ENCODE measurements at regions of chr19 and their contacts with region 1.

Region 1: DNA sequence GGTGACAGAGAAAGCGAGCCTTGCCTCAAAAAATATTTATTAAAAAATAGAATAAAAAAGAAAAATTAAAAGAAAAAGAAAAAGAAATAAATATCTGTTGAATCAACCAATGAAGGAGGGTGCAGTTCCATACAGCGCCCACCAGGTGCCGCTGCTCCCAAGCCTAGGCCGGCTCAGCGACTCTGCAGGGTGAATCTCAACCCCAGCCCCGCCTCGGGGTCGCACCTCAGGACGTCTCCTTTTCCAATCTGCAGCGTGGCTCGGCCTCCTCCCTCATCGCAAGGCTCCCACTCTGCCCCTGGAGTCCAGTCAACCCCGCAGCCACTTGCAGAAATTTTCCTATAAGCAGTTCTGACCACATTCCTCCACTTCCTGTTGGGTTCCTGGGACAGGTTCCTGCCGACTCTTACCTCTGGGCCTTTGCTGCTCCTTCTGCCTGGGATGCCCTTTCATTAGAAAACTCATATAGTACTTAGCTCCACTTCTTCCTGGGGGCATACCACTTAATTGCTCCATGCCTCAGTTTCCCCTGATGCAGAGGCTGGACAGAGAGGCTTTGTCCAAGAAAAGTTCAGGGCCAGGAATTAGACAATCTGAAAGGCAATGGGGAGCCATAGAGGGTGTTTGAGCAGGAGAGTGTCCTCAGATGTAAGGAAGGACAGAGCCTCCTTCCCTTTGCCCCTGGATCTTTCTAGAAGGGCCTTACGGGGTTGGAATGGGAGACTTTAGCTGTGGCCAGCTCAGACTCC is 24.3 kb downstream of the NFILZ start:
- DNase-seq: peak; percentile 49 to 80
- H3K4me3 ChIP-seq: no peak overlapping the region
- H3K4me1 ChIP-seq: no peaks in the 10 kb centered on the region
- H3K27me3 ChIP-seq: peaks cover 10% of the 10 kb centered on the region; the same call in 1 of the 2 replicates

Region 2: GRCh38 chr19:9086761-9087160 is 432.0 kb after region 1 on chr19 and contains the start of gene OR1M1:
- in situ Hi-C with region 1: loop called (anchors 10 kb)
- DNase-seq: no peak
- H3K4me3 ChIP-seq: no peak within 1 kb of the TSS
- H3K4me1 ChIP-seq: no peaks in the 10 kb centered on the region
- H3K27me3 ChIP-seq: peaks cover 19% of the 10 kb centered on the region; the same call in 1 of the 2 replicates

Measured in HAP-1 (cell line).